Aorta (tissue), 5 donors: ENCODE measurements at regions of chr16 and their contacts with region 1.

Region 1: DNA sequence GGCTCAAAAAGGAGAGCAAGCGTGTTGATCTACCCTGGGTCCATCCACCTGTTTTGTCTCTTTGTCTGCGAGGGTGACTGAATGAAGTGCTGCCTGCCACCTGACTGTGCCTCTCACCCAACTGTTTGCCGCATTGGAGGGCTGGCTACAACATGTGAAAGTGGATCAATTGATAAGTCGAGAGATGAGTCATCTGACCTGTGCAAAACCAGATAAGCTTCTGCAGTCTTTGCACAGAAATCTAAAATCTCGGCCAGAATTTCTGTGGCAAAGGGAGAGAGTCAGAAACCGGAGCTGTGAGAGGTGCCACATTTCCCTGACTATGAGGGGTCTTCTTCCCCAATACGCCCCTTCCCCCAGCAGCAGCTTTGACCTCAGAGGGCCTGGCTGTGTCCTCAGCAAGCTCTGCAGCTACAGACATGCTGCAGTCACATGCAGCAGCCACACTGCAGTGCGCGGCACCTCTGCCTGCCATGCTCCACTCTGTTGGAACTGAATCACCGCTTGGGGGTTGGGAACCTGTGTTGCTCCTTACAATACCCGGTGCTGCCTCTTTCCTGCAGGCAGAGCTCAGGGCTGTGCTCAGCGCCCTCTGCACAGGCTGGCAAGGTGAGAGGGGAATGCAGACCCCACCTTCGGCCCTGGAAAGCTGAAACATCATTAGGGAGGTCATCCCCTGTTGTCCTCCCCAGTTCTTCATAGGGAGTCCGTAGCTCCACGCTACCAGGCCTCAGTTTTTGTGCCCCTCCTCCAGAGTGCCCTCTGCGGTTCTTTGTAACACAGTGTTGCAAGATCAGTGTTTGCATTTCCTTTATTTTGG is 16.2 kb upstream of the HAS3 start:
- DNase-seq: no peak
- ATAC-seq: no peak
- H3K4me3 ChIP-seq: no peak overlapping the region
- H3K27ac ChIP-seq: no peak overlapping the region
- H3K4me1 ChIP-seq: no peaks in the 10 kb centered on the region
- H3K27me3 ChIP-seq: no peaks in the 10 kb centered on the region

Region 2: GRCh38 chr16:69105489-69106361 is 16.4 kb after region 1 on chr16 and contains the start of gene HAS3:
- intact Hi-C with region 1: loop called in 1 of 2 experiments (anchors 1 kb)
- DNase-seq: peak; percentile 57 to 84
- ATAC-seq: peak; percentile 60
- H3K4me3 ChIP-seq: peak within 1 kb of the TSS; percentile 17 to 56
- H3K27ac ChIP-seq: no peak within 1 kb of the TSS
- H3K4me1 ChIP-seq: no peaks in the 10 kb centered on the region
- H3K27me3 ChIP-seq: no peaks in the 10 kb centered on the region
- total RNA-seq, gene HAS3: 0.68 to 1.3 TPM